ENCODE measurements at regions of chr16 and their contacts with region 1.

Region 1: GRCh38 chr16:85554112-85554813 is 58.9 kb upstream of the GSE1 start:
- DNase-seq: peak; percentile 84 to 87 (median 86)
- H3K4me3 ChIP-seq: peak overlapping the region; percentile 80 to 99 (median 94)
- H3K4me3 Mint-ChIP-seq: peak overlapping the region; percentile 89 to 97
- H3K27ac ChIP-seq: peak overlapping the region; percentile 92 to 98
- H3K27ac Mint-ChIP-seq: peak overlapping the region; percentile 94 to 98 (median 97)
- H3K4me1 ChIP-seq: peaks cover 34 to 41% of the 10 kb centered on the region in 2 donors
- H3K4me1 Mint-ChIP-seq: peaks cover 42% of the 10 kb centered on the region
- H3K27me3 ChIP-seq: no peaks in the 10 kb centered on the region
- H3K27me3 Mint-ChIP-seq: peaks cover 3% of the 10 kb centered on the region in 3 donors
- CTCF ChIP-seq: no peak

Region 2: DNA sequence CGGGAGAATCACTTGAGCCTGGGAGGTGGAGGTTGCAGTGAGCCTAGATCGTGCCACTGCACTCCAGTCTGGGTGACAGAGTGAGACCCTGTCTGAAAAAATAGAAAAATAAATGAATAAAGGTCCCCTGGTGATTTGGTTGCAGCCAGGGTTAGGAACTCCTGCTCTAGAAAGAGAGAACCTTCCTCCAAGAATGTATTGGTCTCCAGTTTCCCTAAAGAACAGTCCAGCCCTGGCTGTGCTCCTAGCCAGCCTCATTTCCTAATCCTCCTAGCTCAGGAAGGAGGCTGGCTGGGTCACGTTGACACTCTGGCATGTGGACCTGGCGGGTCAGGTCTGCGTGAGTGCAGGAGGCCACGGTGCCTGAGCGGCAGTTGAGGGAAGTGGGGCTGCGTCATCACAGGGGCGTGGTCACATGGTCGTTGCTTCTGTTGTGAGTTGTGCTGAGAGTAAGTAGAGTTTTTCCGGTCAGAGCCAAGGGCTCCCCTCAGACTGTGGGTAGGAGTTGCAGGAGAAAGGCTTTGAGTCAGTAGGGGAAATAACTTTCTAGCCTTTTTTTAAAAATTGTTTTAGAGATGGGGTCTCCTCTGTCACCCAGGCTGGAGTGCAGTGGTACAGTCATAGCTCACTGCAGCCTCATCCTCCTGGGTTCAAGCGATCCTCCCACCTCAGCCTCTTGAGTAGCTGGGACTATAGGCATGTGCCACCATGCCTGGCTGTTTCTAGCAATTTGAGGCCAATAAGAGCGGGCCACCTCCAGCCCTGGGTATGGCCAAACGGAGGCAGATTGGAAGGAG is 248.1 kb before region 1 on chr16:
- intact Hi-C with region 1: loop called in 1 of 2 experiments (anchors 10 kb)
- DNase-seq: peak; percentile 95 to 97 (median 96)
- H3K4me3 ChIP-seq: peak overlapping the region in 1 of 3 experiments; percentile 10
- H3K4me3 Mint-ChIP-seq: peak overlapping the region; percentile 43 to 63
- H3K27ac ChIP-seq: peak overlapping the region; percentile 31 to 75
- H3K27ac Mint-ChIP-seq: peak overlapping the region; percentile 69 to 91 (median 82)
- H3K4me1 ChIP-seq: peaks cover 75 to 82% of the 10 kb centered on the region in 2 donors
- H3K4me1 Mint-ChIP-seq: peaks cover 68% of the 10 kb centered on the region
- H3K27me3 ChIP-seq: peaks cover 0 to under 1% of the 10 kb centered on the region in 2 donors
- H3K27me3 Mint-ChIP-seq: peaks cover 5 to 8% (median 7%) of the 10 kb centered on the region in 3 donors
- CTCF ChIP-seq: no peak

Region 3: GRCh38 chr16:85420501-85421337 is 133.5 kb before region 1 on chr16:
- intact Hi-C with region 1: loop called in 1 of 2 experiments (anchors 2 kb)
- DNase-seq: peak; percentile 63 to 77 (median 67)
- H3K4me3 ChIP-seq: no peak overlapping the region
- H3K4me3 Mint-ChIP-seq: no peak overlapping the region
- H3K27ac ChIP-seq: no peak overlapping the region
- H3K27ac Mint-ChIP-seq: peak overlapping the region in 2 of 7 donors; percentile 2 to 43
- H3K4me1 ChIP-seq: peaks cover 0 to 4% of the 10 kb centered on the region in 2 donors
- H3K4me1 Mint-ChIP-seq: peaks cover 7% of the 10 kb centered on the region
- H3K27me3 ChIP-seq: no peaks in the 10 kb centered on the region
- H3K27me3 Mint-ChIP-seq: peaks cover 6 to 18% (median 7%) of the 10 kb centered on the region in 3 donors
- CTCF ChIP-seq: peak; percentile 100

Region 4: DNA sequence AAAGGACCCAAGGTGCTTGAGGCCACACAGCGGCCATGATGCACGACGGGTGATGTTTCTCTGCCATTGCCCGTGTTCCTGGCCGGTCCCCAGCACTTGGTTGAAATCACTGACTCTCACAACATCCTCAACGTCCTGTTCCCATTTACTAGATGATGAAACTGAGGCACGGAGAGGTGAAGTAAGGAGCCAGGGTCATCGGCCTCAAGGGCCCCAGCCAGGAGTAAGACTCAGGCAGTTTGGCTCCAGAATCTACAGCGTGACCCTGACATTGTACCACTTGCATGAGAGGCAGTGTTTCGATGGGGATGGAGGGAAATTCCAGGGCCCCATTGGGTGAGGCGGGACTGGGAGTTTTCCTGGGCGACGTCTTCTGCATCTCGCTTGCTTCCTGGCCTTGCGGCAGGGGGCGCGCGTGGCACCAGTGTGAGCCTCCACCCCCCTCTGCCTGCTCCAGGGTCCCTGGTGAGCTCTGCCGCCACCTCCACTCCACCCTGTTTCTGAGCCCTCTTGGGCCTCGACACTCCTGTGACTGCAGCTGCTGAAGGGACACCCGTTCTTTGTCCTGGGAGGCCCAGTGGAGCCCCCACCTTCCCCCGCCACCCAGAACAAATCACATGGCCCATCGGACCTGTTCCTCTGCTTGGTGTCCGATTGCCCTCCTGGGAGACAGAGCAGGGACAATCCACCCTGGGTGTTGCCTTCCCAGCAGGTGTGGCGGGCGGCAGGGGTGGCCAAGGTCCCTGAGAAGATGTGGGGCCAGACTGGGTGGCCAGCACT is 74.1 kb before region 1 on chr16:
- intact Hi-C with region 1: no loop called
- DNase-seq: peak in 1 of 3 donors; percentile 32
- H3K4me3 ChIP-seq: no peak overlapping the region
- H3K4me3 Mint-ChIP-seq: no peak overlapping the region
- H3K27ac ChIP-seq: no peak overlapping the region
- H3K27ac Mint-ChIP-seq: no peak overlapping the region
- H3K4me1 ChIP-seq: no peaks in the 10 kb centered on the region
- H3K4me1 Mint-ChIP-seq: peaks cover 4% of the 10 kb centered on the region
- H3K27me3 ChIP-seq: no peaks in the 10 kb centered on the region
- H3K27me3 Mint-ChIP-seq: peaks cover 6 to 7% (median 6%) of the 10 kb centered on the region in 3 donors
- CTCF ChIP-seq: peak; percentile 33

Region 5: GRCh38 chr16:85528528-85529387 is 25.5 kb before region 1 on chr16:
- intact Hi-C with region 1: loop called in 1 of 2 experiments (anchors 2 kb)
- DNase-seq: peak; percentile 23 to 45 (median 32)
- H3K4me3 ChIP-seq: no peak overlapping the region
- H3K4me3 Mint-ChIP-seq: peak overlapping the region; percentile 9 to 42
- H3K27ac ChIP-seq: no peak overlapping the region
- H3K27ac Mint-ChIP-seq: no peak overlapping the region
- H3K4me1 ChIP-seq: peaks cover 20 to 32% of the 10 kb centered on the region in 2 donors
- H3K4me1 Mint-ChIP-seq: peaks cover 23% of the 10 kb centered on the region
- H3K27me3 ChIP-seq: no peaks in the 10 kb centered on the region
- H3K27me3 Mint-ChIP-seq: peaks cover 3 to 5% (median 4%) of the 10 kb centered on the region in 3 donors
- CTCF ChIP-seq: peak; percentile 70

Region 6: GRCh38 chr16:85541980-85542900 is 12.0 kb before region 1 on chr16:
- intact Hi-C with region 1: no loop called
- DNase-seq: peak in 1 of 3 donors; percentile 60
- H3K4me3 ChIP-seq: no peak overlapping the region
- H3K4me3 Mint-ChIP-seq: no peak overlapping the region
- H3K27ac ChIP-seq: no peak overlapping the region
- H3K27ac Mint-ChIP-seq: peak overlapping the region in 2 of 7 donors; percentile 35 to 76
- H3K4me1 ChIP-seq: peaks cover 43 to 57% of the 10 kb centered on the region in 2 donors
- H3K4me1 Mint-ChIP-seq: peaks cover 55% of the 10 kb centered on the region
- H3K27me3 ChIP-seq: no peaks in the 10 kb centered on the region
- H3K27me3 Mint-ChIP-seq: peaks cover 0 to 12% (median 1%) of the 10 kb centered on the region in 3 donors
- CTCF ChIP-seq: no peak

Region 7: GRCh38 chr16:85569615-85570212 is 15.5 kb after region 1 on chr16:
- intact Hi-C with region 1: loop called in 1 of 2 experiments (anchors 2 kb)
- DNase-seq: peak in 2 of 3 donors; percentile 17 to 20
- H3K4me3 ChIP-seq: peak overlapping the region in 1 of 3 experiments; percentile 58
- H3K4me3 Mint-ChIP-seq: peak overlapping the region; percentile 70 to 80
- H3K27ac ChIP-seq: peak overlapping the region; percentile 85 to 94
- H3K27ac Mint-ChIP-seq: peak overlapping the region; percentile 94 to 97 (median 95)
- H3K4me1 ChIP-seq: peaks cover 77 to 89% of the 10 kb centered on the region in 2 donors
- H3K4me1 Mint-ChIP-seq: peaks cover 93% of the 10 kb centered on the region
- H3K27me3 ChIP-seq: no peaks in the 10 kb centered on the region
- H3K27me3 Mint-ChIP-seq: peaks cover 1 to 3% (median 2%) of the 10 kb centered on the region in 3 donors
- CTCF ChIP-seq: no peak

Region 8: GRCh38 chr16:85610508-85611332 is 56.5 kb after region 1 on chr16:
- intact Hi-C with region 1: loop called (anchors 5 kb)
- DNase-seq: peak; percentile 83 to 89 (median 85)
- H3K4me3 ChIP-seq: peak overlapping the region in 2 of 3 experiments; percentile 28 to 84
- H3K4me3 Mint-ChIP-seq: peak overlapping the region; percentile 67 to 82
- H3K27ac ChIP-seq: no peak overlapping the region
- H3K27ac Mint-ChIP-seq: peak overlapping the region in 3 of 7 donors; percentile 58 to 86 (median 73)
- H3K4me1 ChIP-seq: peaks cover 46 to 74% of the 10 kb centered on the region in 2 donors
- H3K4me1 Mint-ChIP-seq: peaks cover 49% of the 10 kb centered on the region
- H3K27me3 ChIP-seq: no peaks in the 10 kb centered on the region
- H3K27me3 Mint-ChIP-seq: peaks cover 4 to 13% (median 7%) of the 10 kb centered on the region in 3 donors
- CTCF ChIP-seq: peak; percentile 99

Region 9: GRCh38 chr16:85615852-85616606 is 61.8 kb after region 1 on chr16:
- intact Hi-C with region 1: loop called (anchors 5 kb)
- DNase-seq: peak; percentile 91 to 94 (median 93)
- H3K4me3 ChIP-seq: peak overlapping the region; percentile 1 to 84 (median 28)
- H3K4me3 Mint-ChIP-seq: peak overlapping the region; percentile 94 to 98
- H3K27ac ChIP-seq: peak overlapping the region; percentile 88 to 93
- H3K27ac Mint-ChIP-seq: peak overlapping the region; percentile 93 to 98 (median 97)
- H3K4me1 ChIP-seq: peaks cover 52 to 68% of the 10 kb centered on the region in 2 donors
- H3K4me1 Mint-ChIP-seq: peaks cover 41% of the 10 kb centered on the region
- H3K27me3 ChIP-seq: no peaks in the 10 kb centered on the region
- H3K27me3 Mint-ChIP-seq: peaks cover 0 to 9% (median 0%) of the 10 kb centered on the region in 3 donors
- CTCF ChIP-seq: peak; percentile 98

Measured in CD14-positive monocyte (primary cell).